MCF 10A (cell line): ENCODE measurements at regions of chr13 and their contacts with region 1.

Region 1: GRCh38 chr13:99067160-99067985 is 89.5 kb upstream of the DOCK9 start:
- DNase-seq: peak; percentile 50
- H3K4me3 Mint-ChIP-seq: no peak overlapping the region
- H3K27ac Mint-ChIP-seq: peak overlapping the region; percentile 87
- H3K4me1 Mint-ChIP-seq: peaks cover 46% of the 10 kb centered on the region
- H3K27me3 Mint-ChIP-seq: no peaks in the 10 kb centered on the region
- CTCF ChIP-seq: no peak

Region 2: GRCh38 chr13:98998831-98999638 is 68.3 kb before region 1 on chr13:
- CTCF ChIA-PET with region 1: no interaction called
- POLR2A ChIA-PET with region 1: no interaction called
- intact Hi-C with region 1: no loop called
- DNase-seq: no peak
- H3K4me3 Mint-ChIP-seq: no peak overlapping the region
- H3K27ac Mint-ChIP-seq: no peak overlapping the region
- H3K4me1 Mint-ChIP-seq: peaks cover 46% of the 10 kb centered on the region
- H3K27me3 Mint-ChIP-seq: no peaks in the 10 kb centered on the region
- CTCF ChIP-seq: no peak

Region 3: DNA sequence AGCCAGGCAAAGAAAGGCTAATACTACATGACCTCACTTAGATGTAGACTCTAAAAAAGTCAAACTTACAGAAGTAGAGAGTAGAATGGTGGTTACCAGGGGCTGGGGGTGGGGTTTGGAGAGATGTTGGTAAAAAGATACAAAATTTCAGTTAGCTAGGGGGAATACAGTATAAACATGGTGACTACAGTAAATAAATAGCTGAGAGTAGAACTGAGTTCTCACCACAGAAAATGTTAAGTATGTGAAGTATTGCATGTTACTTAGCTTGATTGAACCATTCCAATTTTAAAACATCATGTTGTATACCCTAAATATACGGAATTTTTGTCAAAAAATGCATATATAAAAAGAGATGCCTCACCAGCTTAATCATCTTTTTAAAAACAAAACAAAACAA is 22.0 kb before region 1 on chr13:
- CTCF ChIA-PET with region 1: no interaction called
- POLR2A ChIA-PET with region 1: interaction called, 18 read pairs
- intact Hi-C with region 1: no loop called
- DNase-seq: no peak
- H3K4me3 Mint-ChIP-seq: peak overlapping the region; percentile 13
- H3K27ac Mint-ChIP-seq: peak overlapping the region; percentile 90
- H3K4me1 Mint-ChIP-seq: peaks cover 45% of the 10 kb centered on the region
- H3K27me3 Mint-ChIP-seq: no peaks in the 10 kb centered on the region
- CTCF ChIP-seq: no peak

Region 4: GRCh38 chr13:99051768-99052455 is 15.5 kb before region 1 on chr13:
- CTCF ChIA-PET with region 1: interaction called, 3 read pairs
- POLR2A ChIA-PET with region 1: interaction called, 27 read pairs
- intact Hi-C with region 1: no loop called
- DNase-seq: no peak
- H3K4me3 Mint-ChIP-seq: no peak overlapping the region
- H3K27ac Mint-ChIP-seq: no peak overlapping the region
- H3K4me1 Mint-ChIP-seq: peaks cover 39% of the 10 kb centered on the region
- H3K27me3 Mint-ChIP-seq: no peaks in the 10 kb centered on the region
- CTCF ChIP-seq: no peak